ENCODE measurements at regions of chr9 and their contacts with region 1.

Region 1: DNA sequence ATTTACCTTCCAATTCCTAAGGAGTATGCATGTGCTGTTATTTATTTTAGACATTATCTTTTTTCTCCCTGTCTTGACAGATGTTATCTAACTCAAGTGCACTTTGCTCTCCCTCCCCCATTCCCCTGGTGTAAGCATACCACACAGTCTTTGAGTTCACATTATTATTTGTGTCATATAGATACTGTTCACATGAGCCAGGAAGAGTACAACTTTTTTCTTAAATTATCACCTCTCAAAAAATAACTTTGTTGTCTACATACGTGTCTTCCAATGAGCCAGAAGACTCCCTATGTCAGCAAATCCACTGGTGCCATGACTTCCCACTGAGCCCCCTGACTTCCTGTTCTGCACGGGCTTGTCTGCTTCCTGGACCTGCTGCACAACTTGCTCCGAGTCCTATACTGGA is 19.9 kb upstream of the FAM120A start:
- DNase-seq: no peak
- H3K4me3 ChIP-seq: no peak overlapping the region
- H3K27ac ChIP-seq: no peak overlapping the region
- H3K4me1 ChIP-seq: no peaks in the 10 kb centered on the region
- H3K27me3 ChIP-seq: no peaks in the 10 kb centered on the region
- CTCF ChIP-seq: no peak

Region 2: GRCh38 chr9:93379051-93379450 is 52.5 kb before region 1 on chr9:
- CTCF ChIA-PET with region 1: no interaction called
- POLR2A ChIA-PET with region 1: no interaction called
- intact Hi-C with region 1: loop called (anchors 10 kb)
- DNase-seq: no peak
- H3K4me3 ChIP-seq: no peak overlapping the region
- H3K27ac ChIP-seq: no peak overlapping the region
- H3K4me1 ChIP-seq: no peaks in the 10 kb centered on the region
- H3K27me3 ChIP-seq: no peaks in the 10 kb centered on the region
- CTCF ChIP-seq: peak; percentile 36; the same call in 1 of the 2 replicates

Measured in PC-9 (cell line).